Dorsolateral prefrontal cortex (tissue), 120 donors: ENCODE measurements at regions of chr7 and their contacts with region 1.

Region 1: GRCh38 chr7:121366852-121367431 is 29.2 kb downstream of the FAM3C start:
- DNase-seq: no peak
- H3K4me3 ChIP-seq: no peak overlapping the region
- H3K27ac ChIP-seq: peak overlapping the region in 6 of 59 donors; percentile 16 to 32 (median 21)
- H3K27me3 ChIP-seq: no peaks in the 10 kb centered on the region
- CTCF ChIP-seq: peak; percentile 74 to 98 (median 85)

Region 2: DNA sequence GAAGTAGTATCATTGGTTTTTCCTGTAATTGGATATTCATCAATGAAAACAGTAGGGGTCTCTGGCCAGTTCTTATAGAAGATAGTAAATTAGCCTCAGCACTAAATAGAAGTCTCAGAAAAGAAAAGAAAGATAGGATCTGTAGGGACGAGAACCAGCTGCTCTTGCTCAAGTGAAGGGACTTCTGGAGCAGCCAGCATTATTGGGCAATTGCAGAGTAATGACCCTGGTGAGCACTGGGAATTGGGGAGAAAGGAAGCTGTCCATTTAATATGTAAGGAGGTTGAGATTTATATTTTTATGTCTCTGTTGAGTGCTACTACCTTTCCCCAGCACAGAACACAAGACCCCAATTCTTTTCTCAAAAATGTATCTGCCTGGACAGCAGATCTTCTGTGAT is 99.3 kb before region 1 on chr7:
- intact Hi-C with region 1: no loop called
- DNase-seq: no peak
- H3K4me3 ChIP-seq: no peak overlapping the region
- H3K27ac ChIP-seq: no peak overlapping the region
- H3K27me3 ChIP-seq: peaks cover 0 to 3% (median 0%) of the 10 kb centered on the region in 45 donors
- CTCF ChIP-seq: no peak

Region 3: DNA sequence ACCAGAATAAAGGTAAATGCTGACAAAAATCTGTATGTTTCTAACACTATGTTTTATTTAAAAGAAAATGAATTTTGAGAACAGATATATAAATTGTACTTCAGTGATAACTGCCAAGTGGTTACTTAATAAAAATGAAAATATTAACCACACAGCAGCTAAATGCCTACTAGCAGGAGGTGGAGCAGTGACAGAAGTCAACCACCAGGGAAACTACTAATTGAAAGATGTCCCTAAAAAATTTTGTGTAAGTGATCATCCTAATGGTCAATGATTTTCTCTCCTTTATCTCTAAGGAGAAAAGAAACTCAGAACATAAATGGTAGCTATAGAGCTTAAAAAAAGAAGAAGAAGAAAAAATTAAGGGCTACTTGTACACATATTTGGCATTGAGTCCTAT is 15.3 kb before region 1 on chr7:
- intact Hi-C with region 1: no loop called
- DNase-seq: no peak
- H3K4me3 ChIP-seq: no peak overlapping the region
- H3K27ac ChIP-seq: no peak overlapping the region
- H3K27me3 ChIP-seq: no peaks in the 10 kb centered on the region
- CTCF ChIP-seq: peak in 5 of 56 donors; percentile 14 to 31 (median 16)

Region 4: DNA sequence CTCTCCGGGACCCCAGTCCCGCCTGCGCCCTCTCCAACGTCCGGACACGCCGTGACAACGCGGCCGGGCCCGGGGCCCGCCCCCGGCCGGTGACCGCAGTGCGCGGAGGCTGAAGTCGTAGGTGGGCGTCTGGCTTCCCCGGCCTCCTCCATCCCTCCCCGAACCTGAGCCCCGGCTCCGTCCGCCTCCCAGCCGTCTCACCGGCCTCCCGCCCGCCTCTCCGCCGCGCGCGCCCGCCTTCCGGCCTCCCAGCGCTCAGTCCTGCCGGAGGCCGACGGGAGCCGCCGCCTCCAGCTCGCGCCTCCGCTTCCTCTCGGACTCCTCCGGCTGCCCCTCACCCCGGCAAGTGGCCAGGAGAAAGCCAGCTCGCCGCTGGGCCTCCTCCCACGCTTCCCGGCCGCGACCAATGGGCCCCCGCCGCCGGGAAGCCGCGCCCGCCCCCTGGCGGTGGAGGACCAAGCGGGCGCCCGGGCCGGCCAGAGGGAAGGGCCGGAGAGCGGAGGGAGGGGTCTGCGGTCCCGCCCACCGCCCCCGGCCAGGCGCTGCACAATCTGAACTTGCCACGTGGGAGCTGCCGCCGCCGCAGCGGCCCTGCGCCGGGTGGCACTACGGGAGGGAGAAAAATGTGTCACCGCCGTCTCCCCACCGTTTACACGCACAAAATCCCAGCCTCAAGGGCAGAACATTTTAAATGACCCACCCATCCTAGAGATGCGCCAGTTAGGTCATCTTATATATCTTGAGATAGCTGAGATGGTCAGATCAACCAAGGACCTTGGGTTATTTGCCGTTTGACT is 29.2 kb after region 1 on chr7 and contains the start of gene FAM3C:
- intact Hi-C with region 1: no loop called
- DNase-seq: peak; percentile 73 to 96 (median 86)
- H3K4me3 ChIP-seq: peak within 1 kb of the TSS; percentile 59 to 98 (median 83)
- H3K27ac ChIP-seq: peak within 1 kb of the TSS in 58 of 59 donors; percentile 21 to 94 (median 78)
- H3K27me3 ChIP-seq: no peaks in the 10 kb centered on the region
- CTCF ChIP-seq: peak; percentile 69 to 99 (median 93)
- total RNA-seq, gene FAM3C: 41.3 to 176 (median 104) TPM

Region 5: GRCh38 chr7:121547544-121548092 is 180.7 kb after region 1 on chr7:
- intact Hi-C with region 1: loop called (anchors 2 to 5 kb)
- DNase-seq: no peak
- H3K4me3 ChIP-seq: peak overlapping the region in 6 of 59 donors; percentile 10 to 29 (median 24)
- H3K27ac ChIP-seq: no peak overlapping the region
- H3K27me3 ChIP-seq: no peaks in the 10 kb centered on the region
- CTCF ChIP-seq: peak; percentile 60 to 95 (median 80)

Region 6: GRCh38 chr7:121803039-121803438 is 436.1 kb after region 1 on chr7:
- intact Hi-C with region 1: no loop called
- DNase-seq: no peak
- H3K4me3 ChIP-seq: no peak overlapping the region
- H3K27ac ChIP-seq: no peak overlapping the region
- H3K27me3 ChIP-seq: peaks cover 0 to 25% (median 0%) of the 10 kb centered on the region in 45 donors
- CTCF ChIP-seq: no peak

Region 7: GRCh38 chr7:121994625-121995410 is 627.9 kb after region 1 on chr7:
- intact Hi-C with region 1: loop called in 1 of 2 experiments (anchors 5 kb)
- DNase-seq: peak in 9 of 10 donors; percentile 7 to 85 (median 67)
- H3K4me3 ChIP-seq: no peak overlapping the region
- H3K27ac ChIP-seq: no peak overlapping the region
- H3K27me3 ChIP-seq: peaks cover 0 to 8% (median 0%) of the 10 kb centered on the region in 45 donors
- CTCF ChIP-seq: peak; percentile 49 to 85 (median 69)